Right ventricle myocardium inferior (tissue), 1 donor: ENCODE measurements at regions of chr1 and their contacts with region 1.

Region 1: GRCh38 chr1:246907472-246907871 is 24.3 kb downstream of the AHCTF1 start:
- DNase-seq: no peak
- ATAC-seq: no peak

Region 2: GRCh38 chr1:246947255-246947654 is 39.8 kb after region 1 on chr1:
- intact Hi-C with region 1: loop called (anchors 5 kb)
- DNase-seq: peak; percentile 67
- ATAC-seq: peak; percentile 95

Region 3: DNA sequence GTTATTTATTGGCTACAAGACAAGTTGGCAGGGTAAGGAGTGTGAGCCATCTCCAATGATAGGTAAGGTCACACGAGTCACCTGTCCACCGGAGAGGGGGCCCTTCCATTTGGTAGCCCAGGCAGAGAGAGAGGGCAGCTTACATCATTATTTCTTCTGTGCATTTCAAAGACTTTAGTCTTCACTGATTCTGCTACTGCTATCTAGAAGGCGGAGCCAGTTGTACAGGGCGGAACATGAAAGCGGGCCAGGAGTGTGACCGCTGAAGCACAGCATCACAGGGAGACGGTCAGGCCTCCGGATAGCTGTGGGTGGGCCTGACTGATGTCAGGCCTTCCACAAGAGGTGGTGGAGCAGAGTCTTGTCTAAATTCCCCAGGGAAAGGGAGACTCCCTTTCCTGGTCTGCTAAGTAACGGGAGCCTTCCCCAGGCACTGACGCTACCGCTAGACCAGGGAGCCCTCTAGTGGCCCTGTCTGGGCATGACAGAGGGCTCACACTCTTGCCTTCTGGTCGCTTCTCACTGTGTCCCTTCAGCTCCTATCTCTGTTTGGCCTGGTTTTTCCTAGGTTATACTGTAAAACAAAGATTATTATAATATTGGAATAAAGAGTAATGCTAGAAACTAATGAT is 63.7 kb after region 1 on chr1:
- intact Hi-C with region 1: loop called (anchors 1 kb)
- DNase-seq: peak; percentile 71
- ATAC-seq: no peak

Region 4: DNA sequence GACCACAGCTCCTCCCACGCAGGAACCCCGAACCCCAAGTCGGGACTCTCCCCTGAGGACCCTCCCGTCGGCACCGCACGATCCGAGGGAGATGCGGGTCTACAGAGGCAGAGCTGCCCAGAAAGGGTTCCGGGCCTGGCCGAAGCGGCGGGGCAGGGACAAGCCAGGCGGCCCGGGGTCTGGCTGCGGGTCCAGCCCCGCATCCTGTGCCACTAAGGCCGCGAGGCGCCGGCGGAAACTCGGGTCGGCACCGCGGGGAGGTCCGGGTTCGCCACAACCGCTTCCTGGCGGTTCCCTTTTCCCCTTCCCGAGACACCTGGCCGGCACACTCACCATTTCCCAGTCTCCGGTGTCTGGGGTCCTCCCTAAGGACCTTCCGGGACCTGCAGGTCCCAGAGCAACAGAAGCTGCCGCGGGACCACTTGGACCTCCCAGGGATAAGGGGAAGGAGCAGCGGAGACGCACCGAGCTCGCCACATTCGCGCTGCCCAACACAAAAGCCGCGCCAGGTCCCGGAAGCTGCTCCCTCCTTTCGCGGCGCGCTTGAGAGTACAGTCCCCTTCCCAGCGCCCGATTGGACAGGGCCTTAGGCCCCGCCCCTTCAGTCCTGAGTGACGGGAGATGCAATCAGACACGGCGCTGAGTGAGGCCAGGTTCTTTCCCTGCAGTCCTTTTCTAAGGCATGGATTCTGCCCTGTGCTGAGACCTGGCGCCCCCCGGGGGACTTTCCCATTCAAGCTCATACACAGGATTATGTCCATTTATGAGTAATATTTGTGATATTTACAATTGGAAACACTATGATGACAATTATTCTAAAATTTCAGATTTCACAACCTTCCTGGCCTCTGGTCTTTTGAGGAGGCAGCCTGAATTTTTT is 171.0 kb after region 1 on chr1 and contains the start of gene ZNF670:
- intact Hi-C with region 1: no loop called
- DNase-seq: peak; percentile 96
- ATAC-seq: peak; percentile 100
- total RNA-seq, gene ZNF670: 1.0 TPM